ENCODE measurements at regions of chr10 and their contacts with region 1.

Region 1: DNA sequence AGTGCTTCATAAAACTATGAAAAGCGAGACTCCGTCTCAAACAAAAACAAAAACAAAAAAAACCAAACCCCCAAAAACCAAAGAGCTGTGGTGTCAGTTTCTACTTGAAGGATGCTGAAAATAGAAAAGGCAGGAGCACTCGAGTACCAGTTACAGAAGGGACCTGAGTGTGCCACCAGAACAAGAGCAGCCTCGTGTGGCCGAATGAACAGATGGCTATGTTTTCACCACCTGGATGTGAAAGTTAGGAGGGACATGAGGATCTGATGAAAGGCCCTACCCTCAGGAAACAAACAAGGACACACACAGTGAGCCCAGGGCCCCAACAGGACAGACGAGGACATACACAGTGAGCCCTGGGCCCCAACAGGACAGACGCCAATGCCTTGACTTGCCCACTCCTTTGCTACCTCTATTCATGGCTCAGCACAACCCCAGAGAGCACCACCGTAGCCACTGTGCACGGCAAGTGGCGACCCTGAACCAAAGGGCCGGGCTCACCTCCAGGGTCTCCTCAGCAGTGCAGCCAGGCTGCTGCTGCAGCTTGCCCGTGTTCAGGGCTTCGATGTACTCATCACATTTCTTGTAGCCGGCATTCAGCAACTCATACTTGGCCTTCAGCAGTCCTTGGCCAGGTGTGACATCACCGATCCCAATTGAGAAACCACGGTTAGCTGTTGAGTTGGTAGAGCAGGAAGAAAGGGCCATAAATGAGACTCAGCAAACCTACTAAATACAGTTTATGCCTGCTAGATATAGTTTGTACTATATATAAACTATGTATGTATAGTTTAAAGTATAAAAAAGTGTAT is 24.9 kb downstream of the POLR3A start:
- DNase-seq: no peak
- ATAC-seq: no peak
- H3K4me3 ChIP-seq: no peak overlapping the region
- H3K27ac ChIP-seq: no peak overlapping the region
- H3K4me1 ChIP-seq: no peaks in the 10 kb centered on the region
- H3K27me3 ChIP-seq: no peaks in the 10 kb centered on the region
- CTCF ChIP-seq: no peak

Region 2: DNA sequence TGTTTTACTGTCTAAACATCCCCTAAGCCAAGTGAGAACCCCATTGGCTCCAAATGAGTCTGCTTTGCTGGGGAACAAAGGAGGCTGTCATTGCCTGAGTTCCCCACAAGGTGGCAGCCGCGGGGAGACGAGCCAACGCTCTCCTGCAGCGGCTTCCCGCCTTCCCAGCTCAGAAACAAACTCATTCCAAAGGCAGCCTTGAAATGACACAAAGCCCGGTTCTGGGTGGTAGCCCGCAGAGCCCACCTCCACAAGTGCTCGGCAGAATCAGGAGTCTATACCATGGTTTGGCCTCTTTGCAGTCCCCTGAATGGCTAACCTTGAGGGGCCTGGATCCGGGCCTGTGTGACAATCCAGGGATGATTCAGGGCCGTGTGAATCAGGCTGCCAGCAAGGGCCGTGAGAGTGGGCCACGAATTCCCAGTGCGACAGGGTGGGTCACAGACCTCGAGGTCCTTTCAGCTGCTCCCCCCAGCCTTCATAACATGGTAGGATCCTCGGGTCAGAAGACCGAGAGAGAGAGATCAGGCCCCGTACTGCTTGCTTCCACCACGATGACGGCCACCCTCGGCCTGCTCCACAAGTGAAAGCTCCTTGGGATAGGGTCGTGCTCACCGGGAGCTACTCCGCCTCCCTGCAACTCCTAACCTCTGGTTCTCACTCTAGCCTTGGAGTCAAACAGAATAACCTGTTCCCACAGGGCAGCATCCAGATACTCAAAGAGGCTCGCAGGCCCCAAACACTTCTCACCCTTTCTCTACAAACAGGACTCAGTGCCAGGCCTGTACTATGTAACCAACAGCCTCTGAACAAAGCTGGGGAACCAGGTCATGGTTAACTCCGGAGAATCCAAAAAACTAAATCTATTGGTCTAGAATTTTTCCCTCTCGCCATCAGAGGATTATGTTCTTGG is 157.4 kb before region 1 on chr10:
- intact Hi-C with region 1: loop called in 1 of 2 experiments (anchors 10 kb)
- DNase-seq: peak; percentile 69 to 90 (median 80)
- ATAC-seq: peak; percentile 96
- H3K4me3 ChIP-seq: no peak overlapping the region
- H3K27ac ChIP-seq: peak overlapping the region in 1 of 2 donors; percentile 26
- H3K4me1 ChIP-seq: peaks cover 0 to 8% of the 10 kb centered on the region in 2 donors
- H3K27me3 ChIP-seq: no peaks in the 10 kb centered on the region
- CTCF ChIP-seq: peak; percentile 93 to 95

Region 3: DNA sequence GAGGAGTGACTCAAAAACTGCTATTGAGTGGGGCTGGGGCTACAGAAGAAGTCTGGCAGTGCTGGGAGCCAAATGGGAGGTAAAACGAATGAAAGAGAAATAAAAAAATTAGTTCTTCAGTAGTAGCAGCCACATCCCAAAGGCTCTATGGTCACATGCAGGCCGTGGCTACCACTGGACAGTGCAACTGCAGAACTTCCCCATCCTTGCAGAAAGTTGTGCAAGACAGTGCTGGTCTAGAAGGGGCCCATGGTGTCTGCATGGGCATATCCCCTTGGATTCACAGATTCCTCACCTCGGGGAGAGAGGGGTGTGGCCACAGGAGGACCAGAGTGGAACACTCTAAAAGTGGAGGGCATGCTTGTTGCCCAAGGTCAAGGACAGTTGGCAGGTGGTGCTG is 76.9 kb after region 1 on chr10:
- intact Hi-C with region 1: no loop called
- DNase-seq: no peak
- ATAC-seq: peak; percentile 17
- H3K4me3 ChIP-seq: no peak overlapping the region
- H3K27ac ChIP-seq: no peak overlapping the region
- H3K4me1 ChIP-seq: no peaks in the 10 kb centered on the region
- H3K27me3 ChIP-seq: no peaks in the 10 kb centered on the region
- CTCF ChIP-seq: no peak

Measured in left lung (tissue), 14 donors.